Posterior cingulate gyrus (tissue), 11 donors: ENCODE measurements at regions of chr4 and their contacts with region 1.

Region 1: GRCh38 chr4:85370430-85371032 is 104.4 kb upstream of the ARHGAP24 start:
- DNase-seq: peak in 4 of 10 donors; percentile 3 to 24 (median 10)

Region 2: GRCh38 chr4:85457752-85458467 is 87.4 kb after region 1 on chr4:
- intact Hi-C with region 1: no loop called
- DNase-seq: no peak

Region 3: GRCh38 chr4:85747882-85748491 is 377.5 kb after region 1 on chr4:
- intact Hi-C with region 1: loop called (anchors 10 kb)
- DNase-seq: peak in 2 of 10 donors; percentile 39 to 53